ENCODE measurements at regions of chr7 and their contacts with region 1.

Region 1: DNA sequence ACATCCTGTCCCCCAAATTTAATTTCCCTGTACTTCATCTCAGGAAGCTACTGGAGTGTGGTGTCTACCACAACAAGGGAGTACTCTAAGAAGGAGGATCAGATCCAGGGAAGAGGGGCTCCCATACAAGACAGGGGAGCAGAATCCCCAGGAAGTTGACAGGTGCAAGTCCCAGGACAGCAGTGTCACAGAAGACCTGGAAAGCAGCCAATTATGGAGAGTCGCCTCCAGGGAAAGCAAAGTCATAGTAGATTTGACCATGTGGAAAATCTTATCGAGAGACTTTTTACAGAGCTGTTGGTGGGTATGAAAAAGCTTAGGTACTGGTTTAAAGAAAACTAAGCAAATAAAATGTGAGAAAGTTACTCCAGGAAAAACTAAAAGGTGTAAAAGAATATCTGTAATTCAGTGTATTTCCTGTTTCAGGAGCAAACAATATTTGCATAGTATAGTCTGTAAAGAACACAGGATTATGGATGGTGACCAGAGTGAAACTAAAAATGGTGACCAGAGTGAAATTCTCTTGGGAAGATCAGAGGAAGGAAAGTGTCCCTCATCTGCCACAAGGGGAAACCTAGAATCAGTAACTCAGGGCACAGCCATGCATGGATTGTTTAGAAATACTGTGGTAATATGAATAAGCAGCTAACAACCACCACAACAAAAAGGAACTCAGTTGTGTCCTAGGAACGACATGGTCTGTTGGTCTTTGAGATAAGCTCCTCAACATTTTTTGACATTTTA is 44.5 kb downstream of the LANCL2 start:
- DNase-seq: no peak
- H3K4me3 ChIP-seq: peak overlapping the region in 1 of 3 donors; percentile 33
- H3K27ac ChIP-seq: peak overlapping the region; percentile 33 to 56
- H3K4me1 ChIP-seq: peaks cover 4 to 20% (median 11%) of the 10 kb centered on the region in 3 donors
- H3K27me3 ChIP-seq: no peaks in the 10 kb centered on the region
- CTCF ChIP-seq: peak; percentile 5

Region 2: DNA sequence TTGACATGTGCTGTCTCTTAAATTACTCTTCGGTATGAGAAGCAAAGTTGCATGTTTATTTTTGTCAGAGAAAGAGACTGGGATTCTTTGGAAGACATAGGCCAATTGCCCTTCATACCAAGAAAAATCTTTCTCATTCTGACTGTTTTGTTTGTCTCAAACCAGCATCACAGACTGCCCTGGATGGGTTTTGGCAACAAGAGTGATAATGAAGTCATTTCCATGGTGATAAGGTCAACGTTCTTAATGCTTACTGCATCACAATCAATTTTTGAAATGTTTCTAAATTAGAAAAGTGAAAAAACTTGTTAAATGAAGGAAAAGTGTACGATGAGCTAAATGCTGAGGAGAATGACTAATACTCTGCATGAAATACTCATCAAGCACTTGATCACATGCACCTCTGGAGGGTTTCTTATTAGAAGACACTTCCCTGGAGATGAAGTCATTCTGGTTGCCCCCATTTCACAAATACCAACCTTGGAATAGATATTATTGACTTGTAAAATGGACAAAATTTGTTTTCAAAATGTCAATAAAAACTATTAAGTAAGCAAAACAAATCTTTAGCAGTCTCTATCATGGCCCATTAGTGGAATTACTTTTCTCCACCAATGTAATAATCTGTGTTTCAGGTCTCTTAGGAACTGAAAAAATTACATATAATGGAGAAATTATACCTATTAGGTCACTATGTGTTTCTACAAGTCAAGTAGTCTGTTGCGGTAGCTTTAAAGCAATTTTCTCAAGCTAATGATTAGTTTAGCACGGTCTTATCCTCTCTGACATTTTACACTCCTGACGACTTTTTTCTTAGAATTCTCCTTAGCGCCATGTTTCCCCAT is 630.7 kb before region 1 on chr7:
- intact Hi-C with region 1: no loop called
- DNase-seq: no peak
- H3K4me3 ChIP-seq: no peak overlapping the region
- H3K27ac ChIP-seq: no peak overlapping the region
- H3K4me1 ChIP-seq: no peaks in the 10 kb centered on the region
- H3K27me3 ChIP-seq: no peaks in the 10 kb centered on the region
- CTCF ChIP-seq: no peak

Region 3: DNA sequence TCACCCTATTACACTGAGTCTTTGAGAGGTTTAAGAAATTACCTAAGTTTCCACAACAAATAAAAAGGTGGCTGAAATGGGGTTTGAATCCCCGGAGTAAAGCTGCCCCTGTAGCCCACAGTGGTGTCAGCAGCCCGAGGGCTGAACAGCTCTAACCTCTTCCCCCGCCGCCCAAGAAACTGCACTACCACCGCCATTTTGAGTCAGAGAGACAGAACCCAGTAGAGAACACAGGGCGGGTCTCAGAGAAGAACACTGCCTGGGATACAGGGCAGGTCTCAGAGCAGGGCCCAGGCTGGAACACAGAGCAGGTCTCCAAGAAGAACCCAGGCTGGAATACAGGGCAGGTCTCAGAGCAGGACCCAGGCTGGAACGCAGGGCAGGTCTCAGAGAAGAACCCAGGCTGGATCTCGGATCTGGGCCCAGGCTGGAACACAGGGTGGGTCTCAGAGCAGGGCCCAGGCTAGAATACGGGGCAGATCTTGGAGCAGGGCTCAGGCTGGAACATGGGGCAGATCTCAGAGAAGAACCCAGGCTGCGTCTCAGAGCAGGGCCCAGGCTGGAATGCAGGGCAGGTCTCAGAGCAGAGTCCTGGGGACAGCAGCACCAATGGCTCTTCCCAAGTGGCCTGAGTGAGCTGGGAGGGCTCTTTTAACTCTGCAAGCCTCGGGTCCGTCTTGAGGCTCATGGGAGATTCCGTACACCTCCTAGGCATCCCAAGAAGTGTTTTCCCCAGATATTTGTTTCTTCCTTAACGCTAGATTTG is 130.4 kb before region 1 on chr7:
- intact Hi-C with region 1: loop called (anchors 5 kb)
- DNase-seq: no peak
- H3K4me3 ChIP-seq: no peak overlapping the region
- H3K27ac ChIP-seq: no peak overlapping the region
- H3K4me1 ChIP-seq: no peaks in the 10 kb centered on the region
- H3K27me3 ChIP-seq: no peaks in the 10 kb centered on the region
- CTCF ChIP-seq: no peak

Measured in kidney (tissue), 22 donors.